ENCODE measurements at regions of chr5 and their contacts with region 1.

Region 1: DNA sequence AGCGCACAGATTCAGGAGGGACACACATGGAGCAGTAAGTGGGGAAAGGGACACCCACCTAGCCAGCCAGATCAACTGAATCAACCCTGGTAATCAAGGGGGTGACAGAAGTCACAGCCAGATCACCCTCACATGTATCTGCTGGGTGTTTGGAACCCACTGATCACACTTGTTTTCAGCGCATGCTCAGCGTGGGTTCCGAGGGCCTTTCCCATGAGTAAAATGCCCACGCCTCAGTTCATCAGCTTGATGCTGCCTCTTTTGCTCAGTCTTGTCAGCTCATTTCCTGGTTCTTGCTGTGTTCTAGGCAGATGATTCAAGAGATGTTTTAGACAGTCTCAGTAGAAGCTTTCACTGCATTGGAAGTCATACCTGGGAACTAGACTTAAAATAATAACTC is 123.2 kb upstream of the SLC30A5 start:
- DNase-seq: no peak
- ATAC-seq: no peak

Region 2: DNA sequence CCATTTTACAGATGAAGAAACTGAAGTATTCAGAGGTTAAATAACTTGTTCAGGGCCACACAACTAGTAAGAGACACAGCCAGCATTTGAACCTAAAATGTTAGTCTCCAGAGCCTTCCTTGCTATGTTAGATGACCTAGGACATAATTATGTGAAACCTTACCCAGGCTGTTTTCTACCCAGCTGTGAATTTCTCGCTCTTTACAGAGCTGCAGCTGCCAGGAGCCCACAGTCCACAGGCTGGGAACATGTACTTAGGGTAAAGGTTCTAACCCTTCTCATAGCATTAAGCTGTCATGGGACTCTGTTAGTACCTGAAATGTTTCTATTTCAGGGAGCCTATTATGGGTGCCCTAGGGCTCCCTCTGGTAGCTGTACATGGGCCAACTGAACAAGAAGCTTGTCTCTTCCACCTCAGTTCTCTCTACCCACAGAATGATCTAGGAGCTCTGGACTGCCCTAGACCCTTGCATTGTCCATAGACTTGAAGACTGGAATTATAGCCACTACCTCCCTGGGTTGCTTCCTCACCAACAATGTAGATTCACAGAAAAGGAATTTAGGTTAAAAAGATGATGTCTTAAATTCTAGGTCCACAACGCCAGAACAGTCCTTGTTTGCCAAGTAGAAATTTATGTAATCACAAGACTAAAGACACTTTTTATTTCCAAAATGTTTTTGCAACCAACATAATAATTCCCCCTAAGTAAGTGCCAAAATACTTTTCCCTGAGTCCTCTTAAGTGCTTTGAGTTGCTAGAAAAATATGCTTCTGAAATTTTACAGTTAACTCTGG is 492.1 kb before region 1 on chr5:
- intact Hi-C with region 1: loop called (anchors 10 kb)
- DNase-seq: no peak
- ATAC-seq: peak; percentile 65

Measured in Right ventricle myocardium superior (tissue), 1 donor.